ENCODE measurements at regions of chr13 and their contacts with region 1.

Region 1: GRCh38 chr13:112942689-112943308 is 26.2 kb upstream of the MCF2L start:
- H3K4me3 Mint-ChIP-seq: peak overlapping the region; percentile 68
- H3K27ac Mint-ChIP-seq: no peak overlapping the region
- H3K4me1 Mint-ChIP-seq: peaks cover 11% of the 10 kb centered on the region
- H3K27me3 Mint-ChIP-seq: peaks cover 52% of the 10 kb centered on the region

Region 2: GRCh38 chr13:113208424-113209335 is 265.9 kb after region 1 on chr13 and contains the start of gene PCID2:
- intact Hi-C with region 1: loop called (anchors 10 kb)
- H3K4me3 Mint-ChIP-seq: peak within 1 kb of the TSS; percentile 81
- H3K27ac Mint-ChIP-seq: peak within 1 kb of the TSS; percentile 82
- H3K4me1 Mint-ChIP-seq: peaks cover 66% of the 10 kb centered on the region
- H3K27me3 Mint-ChIP-seq: no peaks in the 10 kb centered on the region

Measured in dendritic cell treated with granulocyte-macrophage colony-stimulating factor and Interleukin-4, amounts not matched to agents 40 ng/mL and 50 ng/mL, for 4 days (primary cell).